ENCODE measurements at regions of chr7 and their contacts with region 1.

Region 1: DNA sequence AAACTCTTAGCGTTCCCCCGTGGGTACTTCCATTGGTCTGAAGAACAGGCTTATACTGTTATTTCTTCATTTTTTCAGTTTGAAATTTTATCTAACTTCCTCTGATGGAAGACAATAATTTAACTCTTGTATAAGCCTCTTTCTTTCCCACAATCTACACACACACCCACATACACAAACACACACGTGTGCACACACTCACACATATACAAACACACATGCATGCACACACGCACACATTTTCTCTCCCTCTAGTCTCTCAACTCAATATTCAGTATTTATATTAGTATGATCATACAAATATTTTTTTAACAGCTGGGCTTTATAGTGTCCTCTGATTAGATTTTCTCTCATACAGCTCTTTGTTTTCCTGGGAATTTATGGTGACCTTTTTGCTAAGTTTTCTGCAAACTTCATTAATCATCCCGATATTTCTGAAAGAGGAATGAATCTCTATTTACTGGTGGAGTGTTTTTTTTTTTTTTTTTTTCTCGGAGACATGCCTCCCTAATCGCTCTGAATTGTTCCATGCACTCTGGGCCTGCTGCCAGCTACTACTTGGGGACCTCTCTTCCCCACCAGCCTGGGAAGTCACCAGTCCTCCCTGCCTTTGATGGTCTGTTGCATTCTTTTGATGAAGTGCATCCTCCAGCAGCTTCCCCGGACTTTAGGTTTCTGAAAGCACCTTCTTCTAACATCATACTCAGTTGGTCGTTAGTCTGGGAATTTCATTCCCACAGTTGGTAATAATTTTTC is 75.5 kb downstream of the ZNF777 start:
- DNase-seq: no peak
- ATAC-seq: no peak
- H3K4me3 ChIP-seq: no peak overlapping the region
- H3K4me3 Mint-ChIP-seq: no peak overlapping the region
- H3K27ac ChIP-seq: no peak overlapping the region
- H3K27ac Mint-ChIP-seq: no peak overlapping the region
- H3K4me1 ChIP-seq: no peaks in the 10 kb centered on the region
- H3K4me1 Mint-ChIP-seq: no peaks in the 10 kb centered on the region
- H3K27me3 ChIP-seq: peaks cover 2 to 14% of the 10 kb centered on the region in 2 experiments
- H3K27me3 Mint-ChIP-seq: peaks cover 19 to 26% of the 10 kb centered on the region in 2 donors

Region 2: GRCh38 chr7:149398195-149398820 is 12.9 kb after region 1 on chr7:
- CTCF ChIA-PET with region 1: interaction called in 1 of 2 experiments, 11 read pairs
- POLR2A ChIA-PET with region 1: no interaction called
- DNase-seq: no peak
- ATAC-seq: no peak
- H3K4me3 ChIP-seq: no peak overlapping the region
- H3K4me3 Mint-ChIP-seq: no peak overlapping the region
- H3K27ac ChIP-seq: no peak overlapping the region
- H3K27ac Mint-ChIP-seq: no peak overlapping the region
- H3K4me1 ChIP-seq: no peaks in the 10 kb centered on the region
- H3K4me1 Mint-ChIP-seq: no peaks in the 10 kb centered on the region
- H3K27me3 ChIP-seq: peaks cover 2 to 34% of the 10 kb centered on the region in 2 experiments
- H3K27me3 Mint-ChIP-seq: peaks cover 27 to 36% of the 10 kb centered on the region in 2 donors

Region 3: DNA sequence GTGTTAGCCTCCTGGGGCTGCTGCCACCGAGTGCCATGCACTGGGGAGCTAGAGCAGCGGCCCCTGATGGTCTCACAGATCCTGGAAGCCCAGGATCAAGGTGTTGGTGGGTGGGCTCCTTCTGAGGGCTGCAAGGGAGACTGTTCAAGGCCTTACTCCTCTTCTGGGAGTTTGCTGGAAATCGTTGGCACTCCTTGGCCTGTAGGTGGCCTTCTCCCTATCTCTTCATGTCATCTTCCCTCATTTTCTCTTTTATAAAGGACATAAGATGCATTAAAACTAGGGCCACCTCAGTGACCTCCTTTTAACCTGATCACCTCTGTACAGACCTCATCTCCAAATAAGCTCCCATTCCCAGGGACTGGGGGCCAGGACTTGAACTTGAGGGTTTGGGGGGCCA is 425.8 kb after region 1 on chr7:
- CTCF ChIA-PET with region 1: no interaction called
- POLR2A ChIA-PET with region 1: no interaction called
- DNase-seq: no peak
- ATAC-seq: no peak
- H3K4me3 ChIP-seq: no peak overlapping the region
- H3K4me3 Mint-ChIP-seq: no peak overlapping the region
- H3K27ac ChIP-seq: no peak overlapping the region
- H3K27ac Mint-ChIP-seq: no peak overlapping the region
- H3K4me1 ChIP-seq: peaks cover 5 to 7% of the 10 kb centered on the region in 2 experiments
- H3K4me1 Mint-ChIP-seq: peaks cover 2 to 11% (median 5%) of the 10 kb centered on the region in 3 donors
- H3K27me3 ChIP-seq: peaks cover 0 to 13% of the 10 kb centered on the region in 2 experiments
- H3K27me3 Mint-ChIP-seq: peaks cover 0 to 1% of the 10 kb centered on the region in 2 donors

Measured in T-cell (primary cell).